HAP-1 (cell line): ENCODE measurements at regions of chr1 and their contacts with region 1.

Region 1: DNA sequence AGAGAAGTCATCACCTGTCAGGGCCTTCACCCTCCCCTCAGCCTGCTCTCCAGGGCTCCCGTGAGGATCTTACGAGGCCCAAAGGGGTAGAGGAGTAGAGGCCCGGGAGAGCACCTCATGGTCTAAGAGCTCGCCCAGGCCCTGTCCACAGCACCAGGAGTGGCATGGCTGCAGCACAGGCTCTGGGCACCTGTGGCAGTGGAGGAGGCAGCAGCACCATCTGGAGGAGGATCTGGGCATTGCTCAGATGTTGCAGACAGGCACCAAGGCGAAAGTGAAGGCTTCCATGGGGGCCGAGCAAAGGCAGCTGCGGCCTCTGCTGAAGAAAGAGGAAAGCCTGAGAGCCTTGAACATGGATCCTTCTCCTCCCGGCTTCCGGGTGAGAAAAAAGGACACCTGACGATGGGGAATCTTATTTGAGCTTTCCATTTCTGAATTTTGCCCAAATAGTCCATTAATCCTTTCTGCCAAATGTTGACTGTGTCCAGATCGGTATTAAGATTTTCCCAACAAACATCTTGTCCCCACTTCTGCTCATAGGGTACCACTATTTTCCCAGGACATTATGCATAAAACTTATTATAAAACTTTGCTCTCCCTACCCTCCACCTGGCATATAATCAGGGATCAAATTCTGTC is 604.7 kb downstream of the PTPRC start:
- DNase-seq: peak; percentile 65 to 90
- H3K4me3 ChIP-seq: no peak overlapping the region
- H3K4me1 ChIP-seq: no peaks in the 10 kb centered on the region
- H3K27me3 ChIP-seq: no peaks in the 10 kb centered on the region

Region 2: DNA sequence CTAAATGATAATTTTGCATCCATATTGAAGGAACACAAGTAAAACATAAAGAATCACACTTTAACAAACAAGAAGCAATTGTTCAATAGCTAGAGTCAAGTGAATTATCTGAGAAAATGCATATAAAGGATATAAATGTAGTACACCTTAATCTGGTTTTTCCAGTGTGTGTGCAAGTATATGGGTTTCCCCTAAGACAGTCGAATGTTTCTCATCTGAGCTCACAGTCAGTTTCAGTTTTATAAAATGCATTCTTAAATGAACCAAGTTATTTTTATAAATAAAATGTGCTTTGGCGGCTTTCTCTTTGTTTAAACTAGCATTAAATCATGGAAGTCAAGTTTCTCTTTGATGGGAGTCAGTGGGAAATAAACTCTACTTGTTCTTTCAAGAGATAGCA is 478.8 kb before region 1 on chr1:
- in situ Hi-C with region 1: loop called (anchors 5 kb)
- DNase-seq: no peak
- H3K4me3 ChIP-seq: no peak overlapping the region
- H3K4me1 ChIP-seq: no peaks in the 10 kb centered on the region
- H3K27me3 ChIP-seq: no peaks in the 10 kb centered on the region

Region 3: GRCh38 chr1:198937231-198938031 is 306.1 kb before region 1 on chr1:
- in situ Hi-C with region 1: loop called (anchors 10 kb)
- DNase-seq: peak; percentile 67 to 95
- H3K4me3 ChIP-seq: peak overlapping the region; percentile 59
- H3K4me1 ChIP-seq: peaks cover 7% of the 10 kb centered on the region
- H3K27me3 ChIP-seq: no peaks in the 10 kb centered on the region